Naive thymus-derived CD4-positive, alpha-beta T cell (primary cell): ENCODE measurements at regions of chr4 and their contacts with region 1.

Region 1: DNA sequence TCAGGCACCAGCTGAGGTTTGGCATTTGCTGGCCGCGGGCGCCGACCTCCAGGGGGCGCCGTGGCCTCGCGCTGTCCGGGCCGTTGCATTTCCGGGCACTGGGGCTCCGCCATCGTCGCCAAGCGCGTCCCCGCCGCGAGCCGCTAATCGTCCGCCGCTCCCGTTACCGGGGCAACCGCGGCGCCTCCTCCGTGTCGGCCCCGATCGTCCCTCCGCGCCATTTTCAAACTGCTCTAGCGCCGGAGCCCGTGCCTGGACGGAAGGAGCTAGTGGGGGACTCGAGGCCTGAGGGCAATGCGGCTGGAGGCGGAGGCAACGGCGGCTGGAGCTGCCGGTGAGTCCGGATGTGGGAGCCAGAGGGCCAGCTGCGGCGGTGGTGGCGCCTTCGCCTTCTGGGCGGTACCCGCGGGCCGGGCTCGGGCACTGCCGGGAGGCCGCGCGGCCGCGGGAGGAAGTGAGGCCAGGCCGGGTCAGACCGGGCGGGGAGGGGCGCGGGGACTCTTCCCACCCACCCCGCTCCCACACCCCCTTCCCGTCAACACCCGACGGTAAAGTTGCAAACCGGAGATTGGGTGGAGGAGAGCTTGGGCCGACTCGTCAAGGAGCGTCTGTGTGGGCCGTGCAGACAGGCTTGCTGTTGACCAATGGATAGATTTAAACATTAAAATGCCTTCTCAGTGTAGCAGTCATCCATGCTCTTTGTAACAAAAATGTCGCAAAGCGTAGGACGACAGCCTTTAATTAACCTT is at the start of gene CEP135:
- DNase-seq: peak; percentile 84 to 94 (median 90)
- ATAC-seq: peak; percentile 88
- H3K4me3 ChIP-seq: peak within 1 kb of the TSS; percentile 88
- H3K4me3 Mint-ChIP-seq: peak within 1 kb of the TSS; percentile 86 to 96 (median 92)
- H3K27ac ChIP-seq: peak within 1 kb of the TSS; percentile 71
- H3K27ac Mint-ChIP-seq: peak within 1 kb of the TSS; percentile 90 to 98 (median 94)
- H3K4me1 ChIP-seq: peaks cover 14 to 15% of the 10 kb centered on the region in 2 donors
- H3K4me1 Mint-ChIP-seq: peaks cover 30 to 69% (median 51%) of the 10 kb centered on the region in 7 donors
- H3K27me3 ChIP-seq: no peaks in the 10 kb centered on the region
- H3K27me3 Mint-ChIP-seq: no peaks in the 10 kb centered on the region
- total RNA-seq, gene CEP135: 20.6 to 38.8 (median 24.6) TPM

Region 2: DNA sequence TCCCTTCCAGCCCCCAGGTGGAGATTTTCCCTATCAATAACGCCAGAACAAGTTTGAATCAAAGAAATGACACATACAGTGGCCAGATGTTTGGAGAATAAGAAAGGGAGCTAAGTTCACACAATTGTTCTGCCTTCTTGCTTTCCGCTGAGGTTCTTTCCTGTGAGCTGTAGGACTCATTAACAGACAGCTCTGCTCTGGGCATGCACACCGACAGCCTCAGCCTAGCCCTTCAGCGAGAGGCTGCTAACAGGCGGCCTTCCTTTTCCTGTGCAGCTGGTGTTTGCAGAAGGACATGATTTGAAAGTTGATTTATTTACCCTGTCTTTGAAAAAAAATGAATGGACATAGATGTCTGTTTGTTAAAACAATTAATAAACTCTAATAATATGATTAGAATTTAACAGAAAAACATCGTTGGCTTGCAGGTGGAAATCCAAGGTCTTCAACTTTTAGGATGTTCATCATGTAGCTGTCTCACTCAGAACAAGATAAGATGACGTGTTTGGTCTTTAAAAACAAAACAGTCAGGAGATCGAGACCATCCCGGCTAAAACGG is 1006.8 kb before region 1 on chr4:
- CTCF ChIA-PET with region 1: no interaction called
- POLR2A ChIA-PET with region 1: no interaction called
- intact Hi-C with region 1: loop called (anchors 1 to 10 kb)
- DNase-seq: peak in 8 of 9 donors; percentile 22 to 82 (median 71)
- ATAC-seq: peak; percentile 79
- H3K4me3 ChIP-seq: peak overlapping the region; percentile 36
- H3K4me3 Mint-ChIP-seq: peak overlapping the region; percentile 71 to 85 (median 79)
- H3K27ac ChIP-seq: peak overlapping the region; percentile 87
- H3K27ac Mint-ChIP-seq: peak overlapping the region; percentile 79 to 99 (median 97)
- H3K4me1 ChIP-seq: peaks cover 0 to 37% of the 10 kb centered on the region in 2 donors
- H3K4me1 Mint-ChIP-seq: peaks cover 27 to 77% (median 58%) of the 10 kb centered on the region in 7 donors
- H3K27me3 ChIP-seq: no peaks in the 10 kb centered on the region
- H3K27me3 Mint-ChIP-seq: peaks cover 0 to 5% (median 0%) of the 10 kb centered on the region in 5 donors

Region 3: GRCh38 chr4:55157559-55158277 is 791.2 kb before region 1 on chr4:
- CTCF ChIA-PET with region 1: no interaction called
- POLR2A ChIA-PET with region 1: no interaction called
- intact Hi-C with region 1: no loop called
- DNase-seq: no peak
- ATAC-seq: no peak
- H3K4me3 ChIP-seq: no peak overlapping the region
- H3K4me3 Mint-ChIP-seq: peak overlapping the region in 3 of 10 donors; percentile 14 to 49 (median 39)
- H3K27ac ChIP-seq: no peak overlapping the region
- H3K27ac Mint-ChIP-seq: no peak overlapping the region
- H3K4me1 ChIP-seq: no peaks in the 10 kb centered on the region
- H3K4me1 Mint-ChIP-seq: peaks cover 0 to 4% (median 0%) of the 10 kb centered on the region in 7 donors
- H3K27me3 ChIP-seq: peaks cover 0 to 3% of the 10 kb centered on the region in 2 donors
- H3K27me3 Mint-ChIP-seq: peaks cover 25 to 58% (median 45%) of the 10 kb centered on the region in 5 donors

Region 4: GRCh38 chr4:55853484-55854046 is 95.3 kb before region 1 on chr4 and contains the start of gene EXOC1:
- CTCF ChIA-PET with region 1: interaction called, 4 read pairs
- POLR2A ChIA-PET with region 1: interaction called, 8 read pairs
- intact Hi-C with region 1: loop called (anchors 1 kb)
- DNase-seq: peak; percentile 93 to 98 (median 94)
- ATAC-seq: peak; percentile 99
- H3K4me3 ChIP-seq: peak within 1 kb of the TSS; percentile 84
- H3K4me3 Mint-ChIP-seq: peak within 1 kb of the TSS in 2 of 10 donors; percentile 34 to 69
- H3K27ac ChIP-seq: peak within 1 kb of the TSS; percentile 87
- H3K27ac Mint-ChIP-seq: peak within 1 kb of the TSS in 7 of 9 donors; percentile 75 to 94 (median 90)
- H3K4me1 ChIP-seq: peaks cover 26 to 31% of the 10 kb centered on the region in 2 donors
- H3K4me1 Mint-ChIP-seq: peaks cover 22 to 48% (median 42%) of the 10 kb centered on the region in 7 donors
- H3K27me3 ChIP-seq: no peaks in the 10 kb centered on the region
- H3K27me3 Mint-ChIP-seq: no peaks in the 10 kb centered on the region
- total RNA-seq, gene EXOC1: 20.3 to 46.7 (median 32.1) TPM

Region 5: DNA sequence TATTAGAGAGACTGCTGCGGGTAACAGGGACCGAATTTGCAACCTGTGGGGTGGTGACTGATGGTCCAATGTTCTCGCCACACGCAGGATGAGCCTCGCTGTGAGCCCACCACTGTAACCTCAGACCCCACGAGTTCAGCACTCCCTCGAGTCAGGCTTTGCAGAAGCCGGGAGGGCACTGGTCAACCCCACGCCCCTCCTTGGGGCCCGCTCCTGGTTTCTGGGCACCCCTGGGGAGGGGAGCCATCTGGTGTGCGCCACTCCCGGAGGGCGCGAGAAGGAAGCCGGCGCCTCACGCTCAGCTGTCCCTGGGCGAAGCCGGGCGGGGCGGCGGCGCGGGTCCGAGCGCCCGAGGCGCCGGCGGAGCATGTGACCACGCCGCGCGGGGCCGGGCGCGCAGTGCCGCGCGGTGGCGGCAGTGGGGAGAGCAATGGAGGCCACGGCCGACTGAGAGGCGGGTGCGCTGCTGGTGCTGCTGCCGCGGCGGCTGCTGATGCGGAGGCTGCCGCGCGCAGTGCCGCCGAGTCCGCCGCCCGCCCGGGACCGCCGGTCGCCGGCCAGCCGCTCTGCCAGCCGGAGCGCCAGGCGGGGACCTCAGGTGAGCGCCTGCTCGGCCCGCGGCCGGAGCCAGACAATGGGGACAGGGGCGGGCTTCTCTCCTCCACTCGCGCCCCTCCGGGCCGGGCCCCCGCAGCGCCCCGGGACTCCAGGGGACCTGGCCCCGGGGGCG is 100.0 kb after region 1 on chr4:
- CTCF ChIA-PET with region 1: no interaction called
- POLR2A ChIA-PET with region 1: no interaction called
- intact Hi-C with region 1: loop called (anchors 1 kb)
- DNase-seq: peak in 6 of 9 donors; percentile 7 to 72 (median 16)
- ATAC-seq: peak; percentile 85
- H3K4me3 ChIP-seq: no peak overlapping the region
- H3K4me3 Mint-ChIP-seq: peak overlapping the region; percentile 55 to 78 (median 73)
- H3K27ac ChIP-seq: no peak overlapping the region
- H3K27ac Mint-ChIP-seq: no peak overlapping the region
- H3K4me1 ChIP-seq: peaks cover 3 to 6% of the 10 kb centered on the region in 2 donors
- H3K4me1 Mint-ChIP-seq: peaks cover 8 to 18% (median 12%) of the 10 kb centered on the region in 7 donors
- H3K27me3 ChIP-seq: peaks cover 6 to 10% of the 10 kb centered on the region in 2 donors
- H3K27me3 Mint-ChIP-seq: peaks cover 43 to 64% (median 55%) of the 10 kb centered on the region in 5 donors

Region 6: DNA sequence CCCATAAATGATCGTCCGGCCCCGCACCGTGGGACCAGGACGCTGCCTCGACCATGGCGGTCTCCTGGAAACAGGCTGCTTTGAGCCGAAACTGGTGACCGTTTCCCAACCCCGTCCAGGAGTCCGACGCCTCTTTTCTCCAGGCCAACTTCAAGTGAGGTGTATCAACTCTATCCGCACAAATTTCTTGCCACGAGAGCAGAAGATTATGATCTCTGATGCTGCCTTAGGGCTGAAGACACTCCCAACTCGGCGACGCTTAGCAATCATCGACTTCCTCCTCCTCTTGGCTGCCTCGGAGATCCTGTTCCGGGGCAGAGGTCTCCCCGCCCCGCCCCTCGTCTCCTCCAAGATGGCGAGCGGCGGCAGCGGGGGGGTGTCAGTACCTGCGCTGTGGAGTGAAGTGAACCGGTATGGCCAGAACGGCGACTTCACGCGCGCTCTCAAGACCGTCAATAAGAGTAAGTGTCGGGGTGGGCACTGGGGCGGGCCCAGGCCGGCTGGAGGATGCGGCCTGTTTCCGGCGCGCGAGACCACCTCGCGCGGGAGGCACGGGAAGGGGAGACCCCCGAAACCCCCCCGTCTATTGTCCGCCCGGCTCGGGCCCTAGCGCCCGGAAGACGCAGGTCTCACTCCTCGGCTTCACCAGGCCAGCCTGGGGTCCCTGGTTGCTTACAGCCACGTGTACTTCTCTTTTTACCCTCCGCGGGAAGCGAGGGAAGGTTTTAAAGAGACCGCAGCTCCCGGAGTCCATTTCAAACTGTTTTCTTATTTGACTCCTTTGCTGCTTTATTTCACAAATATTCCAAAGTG is 518.6 kb after region 1 on chr4 and contains the start of gene SRP72:
- CTCF ChIA-PET with region 1: no interaction called
- POLR2A ChIA-PET with region 1: interaction called, 3 read pairs
- intact Hi-C with region 1: loop called (anchors 1 kb)
- DNase-seq: peak; percentile 80 to 95 (median 88)
- ATAC-seq: peak; percentile 98
- H3K4me3 ChIP-seq: peak within 1 kb of the TSS; percentile 98
- H3K4me3 Mint-ChIP-seq: peak within 1 kb of the TSS; percentile 93 to 100 (median 96)
- H3K27ac ChIP-seq: peak within 1 kb of the TSS; percentile 90
- H3K27ac Mint-ChIP-seq: peak within 1 kb of the TSS; percentile 94 to 99 (median 96)
- H3K4me1 ChIP-seq: peaks cover 25 to 29% of the 10 kb centered on the region in 2 donors
- H3K4me1 Mint-ChIP-seq: peaks cover 46 to 68% (median 62%) of the 10 kb centered on the region in 7 donors
- H3K27me3 ChIP-seq: no peaks in the 10 kb centered on the region
- H3K27me3 Mint-ChIP-seq: no peaks in the 10 kb centered on the region
- total RNA-seq, gene SRP72: 98.4 to 145 (median 109) TPM

Region 7: DNA sequence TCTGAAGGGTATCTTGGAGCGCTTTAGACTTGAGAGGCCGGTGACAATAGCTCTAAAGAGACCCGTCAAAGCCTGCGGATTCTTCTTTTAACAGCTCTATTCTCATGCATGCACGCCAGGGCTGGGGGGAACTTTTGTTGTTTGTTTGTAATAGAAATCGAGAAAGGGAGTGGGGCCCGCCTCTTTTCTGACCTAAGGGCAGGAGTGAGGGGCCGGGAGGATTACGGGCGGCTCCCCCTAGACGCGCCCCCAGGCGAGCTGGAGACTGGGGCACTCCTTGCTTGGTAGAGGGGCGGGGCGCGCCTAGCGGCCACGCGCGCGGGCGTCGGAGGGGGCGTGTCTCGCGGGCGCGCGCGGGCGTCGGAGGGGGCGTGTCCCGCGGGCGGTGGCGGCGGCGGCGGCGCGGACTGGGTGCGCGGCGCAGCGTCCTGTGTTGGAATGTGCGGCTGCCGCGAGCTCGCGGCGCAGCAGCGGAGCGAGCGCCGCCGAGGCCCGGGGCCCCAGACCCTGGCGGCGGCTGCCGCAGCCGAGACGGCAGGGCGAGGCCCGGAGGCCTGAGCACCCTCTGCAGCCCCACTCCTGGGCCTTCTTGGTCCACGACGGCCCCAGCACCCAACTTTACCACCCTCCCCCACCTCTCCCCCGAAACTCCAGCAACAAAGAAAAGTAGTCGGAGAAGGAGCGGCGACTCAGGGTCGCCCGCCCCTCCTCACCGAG is 958.7 kb after region 1 on chr4 and contains the start of gene REST:
- CTCF ChIA-PET with region 1: no interaction called
- POLR2A ChIA-PET with region 1: no interaction called
- intact Hi-C with region 1: loop called (anchors 1 kb)
- DNase-seq: peak; percentile 80 to 95 (median 88)
- ATAC-seq: peak; percentile 89
- H3K4me3 ChIP-seq: peak within 1 kb of the TSS; percentile 92
- H3K4me3 Mint-ChIP-seq: peak within 1 kb of the TSS; percentile 90 to 98 (median 96)
- H3K27ac ChIP-seq: peak within 1 kb of the TSS; percentile 80
- H3K27ac Mint-ChIP-seq: peak within 1 kb of the TSS; percentile 85 to 99 (median 93)
- H3K4me1 ChIP-seq: peaks cover 26 to 33% of the 10 kb centered on the region in 2 donors
- H3K4me1 Mint-ChIP-seq: peaks cover 35 to 53% (median 44%) of the 10 kb centered on the region in 7 donors
- H3K27me3 ChIP-seq: no peaks in the 10 kb centered on the region
- H3K27me3 Mint-ChIP-seq: peaks cover 0 to 13% (median 0%) of the 10 kb centered on the region in 5 donors
- total RNA-seq, gene REST: 55.7 to 86.4 (median 72.8) TPM